Panc1 (cell line): ENCODE measurements at regions of chr15 and their contacts with region 1.

Region 1: GRCh38 chr15:96947296-96948229 is 617.1 kb downstream of the NR2F2 start:
- DNase-seq: no peak
- ATAC-seq: no peak
- H3K4me3 ChIP-seq: no peak overlapping the region
- H3K27ac ChIP-seq: peak overlapping the region; percentile 63; the same call in 1 of the 2 replicates
- H3K4me1 ChIP-seq: peaks cover 4% of the 10 kb centered on the region; the same call in 1 of the 2 replicates
- H3K27me3 ChIP-seq: no peaks in the 10 kb centered on the region
- CTCF ChIP-seq: no peak

Region 2: DNA sequence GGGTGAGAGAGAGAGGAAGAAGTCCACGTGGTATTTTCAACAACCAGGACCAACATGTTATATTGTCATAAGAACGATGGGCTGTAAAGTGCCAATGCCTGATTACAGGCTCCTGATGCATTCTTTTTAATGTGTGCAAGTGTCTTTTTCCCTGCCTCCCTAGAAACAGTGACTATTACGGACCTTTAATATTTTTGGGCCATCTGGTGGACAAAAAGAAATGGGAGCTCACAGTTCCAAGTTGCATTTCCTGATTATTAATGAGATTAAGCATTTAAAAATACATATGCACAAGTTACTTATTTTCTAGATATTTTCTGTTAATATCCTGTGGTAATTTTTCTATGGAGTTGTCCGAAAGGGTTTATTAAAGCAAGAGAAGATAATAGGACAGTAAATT is 86.8 kb before region 1 on chr15:
- CTCF ChIA-PET with region 1: no interaction called
- POLR2A ChIA-PET with region 1: no interaction called
- in situ Hi-C with region 1: no loop called
- intact Hi-C with region 1: no loop called
- DNase-seq: no peak
- ATAC-seq: no peak
- H3K4me3 ChIP-seq: no peak overlapping the region
- H3K27ac ChIP-seq: no peak overlapping the region
- H3K4me1 ChIP-seq: no peaks in the 10 kb centered on the region
- H3K27me3 ChIP-seq: no peaks in the 10 kb centered on the region
- CTCF ChIP-seq: no peak; the same call in 1 of the 2 replicates

Region 3: GRCh38 chr15:97189162-97189780 is 241.7 kb after region 1 on chr15:
- CTCF ChIA-PET with region 1: no interaction called
- POLR2A ChIA-PET with region 1: no interaction called
- in situ Hi-C with region 1: no loop called
- intact Hi-C with region 1: no loop called
- DNase-seq: no peak
- ATAC-seq: no peak
- H3K4me3 ChIP-seq: no peak overlapping the region
- H3K27ac ChIP-seq: no peak overlapping the region
- H3K4me1 ChIP-seq: no peaks in the 10 kb centered on the region
- H3K27me3 ChIP-seq: no peaks in the 10 kb centered on the region
- CTCF ChIP-seq: no peak

Region 4: GRCh38 chr15:98195796-98196195 is 1248.2 kb after region 1 on chr15:
- CTCF ChIA-PET with region 1: no interaction called
- POLR2A ChIA-PET with region 1: interaction called, 12 read pairs
- in situ Hi-C with region 1: no loop called
- intact Hi-C with region 1: no loop called
- DNase-seq: no peak
- ATAC-seq: no peak
- H3K4me3 ChIP-seq: no peak overlapping the region
- H3K27ac ChIP-seq: no peak overlapping the region
- H3K4me1 ChIP-seq: no peaks in the 10 kb centered on the region
- H3K27me3 ChIP-seq: peaks cover 6% of the 10 kb centered on the region
- CTCF ChIP-seq: no peak